Right cardiac atrium (tissue), 5 donors: ENCODE measurements at regions of chr6 and their contacts with region 1.

Region 1: DNA sequence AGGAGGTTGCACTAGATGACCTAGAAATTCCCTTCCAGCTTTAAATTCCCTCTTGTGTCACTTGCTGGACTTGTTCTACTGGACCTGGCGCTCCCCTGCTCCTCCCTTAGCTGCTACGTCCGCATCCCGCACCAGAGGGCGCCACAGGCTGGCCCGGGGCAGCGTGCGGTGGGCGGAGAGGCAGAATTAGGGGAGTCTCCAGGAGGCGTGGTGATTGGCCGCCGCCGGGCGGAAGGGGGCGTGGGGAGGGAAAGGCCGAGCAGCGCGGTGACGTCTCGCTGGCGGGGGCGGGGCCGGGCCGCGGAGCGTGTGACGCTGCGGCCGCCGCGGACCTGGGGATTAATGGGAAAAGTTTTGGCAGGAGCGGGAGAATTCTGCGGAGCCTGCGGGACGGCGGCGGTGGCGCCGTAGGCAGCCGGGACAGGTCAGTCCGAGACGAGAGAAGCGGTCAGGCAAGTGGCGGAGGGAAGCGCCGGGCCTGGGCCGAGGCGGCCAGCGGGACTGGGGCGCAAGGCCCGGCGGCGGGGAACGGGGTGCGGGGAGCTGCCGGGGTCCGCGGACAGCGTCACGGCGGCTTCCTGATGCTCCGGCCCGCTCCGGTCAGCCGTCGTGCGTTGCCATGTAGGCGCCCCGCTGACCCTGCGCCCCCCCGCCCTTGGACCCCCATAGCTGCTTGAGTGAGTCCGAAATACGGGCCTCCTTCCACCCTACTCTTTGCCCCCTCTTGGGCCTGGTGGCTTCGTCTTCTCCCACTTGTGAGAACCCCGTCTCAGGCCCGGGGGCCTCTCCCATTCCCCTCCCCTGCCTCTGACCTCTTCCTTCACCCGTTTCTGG is at the start of gene PPARD:
- DNase-seq: peak; percentile 98 to 100 (median 99)
- ATAC-seq: peak; percentile 99
- H3K4me3 ChIP-seq: peak within 1 kb of the TSS; percentile 77
- H3K27ac ChIP-seq: peak within 1 kb of the TSS; percentile 72
- H3K4me1 ChIP-seq: no peaks in the 10 kb centered on the region
- H3K27me3 ChIP-seq: no peaks in the 10 kb centered on the region
- total RNA-seq, gene PPARD: 20.5 to 22.6 (median 21.3) TPM

Region 2: DNA sequence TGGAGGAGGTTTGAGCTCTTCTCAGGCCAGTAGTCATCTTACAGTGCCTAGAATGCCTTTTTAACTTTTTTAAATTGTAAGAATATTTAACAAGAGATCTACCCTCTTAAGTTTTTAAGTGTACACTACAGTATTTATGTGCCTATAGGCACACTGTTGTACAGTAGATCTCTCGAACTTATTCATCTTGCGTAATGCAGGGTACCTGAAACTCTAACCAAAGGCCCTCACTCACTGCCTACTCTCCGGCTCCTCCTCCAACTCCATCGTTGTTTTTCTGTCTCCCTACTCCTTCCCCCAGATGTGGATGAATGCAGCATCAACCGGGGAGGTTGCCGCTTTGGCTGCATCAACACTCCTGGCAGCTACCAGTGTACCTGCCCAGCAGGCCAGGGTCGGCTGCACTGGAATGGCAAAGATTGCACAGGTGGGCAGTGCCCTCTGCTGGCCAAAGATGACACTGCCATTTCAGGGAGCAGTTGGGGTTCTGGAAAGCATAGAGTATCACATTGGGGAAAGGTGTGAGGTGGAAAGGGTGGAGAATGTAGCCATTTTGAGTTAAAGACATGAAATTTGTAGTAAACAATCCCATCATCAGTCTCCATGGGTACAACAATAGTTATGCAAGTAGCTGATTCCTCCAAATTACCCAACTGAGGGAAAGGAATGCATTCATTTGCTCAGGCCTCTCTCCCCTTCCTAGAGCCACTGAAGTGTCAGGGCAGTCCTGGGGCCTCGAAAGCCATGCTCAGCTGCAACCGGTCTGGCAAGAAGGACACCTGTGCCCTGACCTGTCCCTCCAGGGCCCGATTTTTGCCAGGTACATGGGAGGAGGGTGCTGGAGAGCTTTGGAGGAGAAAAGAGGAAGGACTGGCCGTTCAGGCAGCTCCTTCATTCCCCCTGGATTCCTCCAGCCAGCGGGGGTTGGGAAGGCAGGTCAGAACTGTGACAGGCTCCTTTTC is 101.4 kb before region 1 on chr6:
- intact Hi-C with region 1: no loop called
- DNase-seq: peak; percentile 61 to 85 (median 85)
- ATAC-seq: peak; percentile 30 to 61
- H3K4me3 ChIP-seq: no peak overlapping the region
- H3K27ac ChIP-seq: no peak overlapping the region
- H3K4me1 ChIP-seq: peaks cover 6% of the 10 kb centered on the region
- H3K27me3 ChIP-seq: no peaks in the 10 kb centered on the region

Region 3: GRCh38 chr6:35259194-35259947 is 83.1 kb before region 1 on chr6 and contains the start of gene ZNF76:
- intact Hi-C with region 1: no loop called
- DNase-seq: peak; percentile 99 to 100 (median 99)
- ATAC-seq: peak; percentile 96 to 97
- H3K4me3 ChIP-seq: peak within 1 kb of the TSS; percentile 74
- H3K27ac ChIP-seq: peak within 1 kb of the TSS; percentile 84
- H3K4me1 ChIP-seq: peaks cover 4% of the 10 kb centered on the region
- H3K27me3 ChIP-seq: no peaks in the 10 kb centered on the region
- total RNA-seq, gene ZNF76: 28.6 to 44.4 (median 38.2) TPM

Region 4: GRCh38 chr6:35415065-35415991 is 72.9 kb after region 1 on chr6:
- intact Hi-C with region 1: loop called (anchors 5 to 10 kb)
- DNase-seq: peak; percentile 72 to 90 (median 83)
- ATAC-seq: peak; percentile 76 to 88
- H3K4me3 ChIP-seq: no peak overlapping the region
- H3K27ac ChIP-seq: no peak overlapping the region
- H3K4me1 ChIP-seq: no peaks in the 10 kb centered on the region
- H3K27me3 ChIP-seq: no peaks in the 10 kb centered on the region